ENCODE measurements at regions of chr10 and their contacts with region 1.

Region 1: DNA sequence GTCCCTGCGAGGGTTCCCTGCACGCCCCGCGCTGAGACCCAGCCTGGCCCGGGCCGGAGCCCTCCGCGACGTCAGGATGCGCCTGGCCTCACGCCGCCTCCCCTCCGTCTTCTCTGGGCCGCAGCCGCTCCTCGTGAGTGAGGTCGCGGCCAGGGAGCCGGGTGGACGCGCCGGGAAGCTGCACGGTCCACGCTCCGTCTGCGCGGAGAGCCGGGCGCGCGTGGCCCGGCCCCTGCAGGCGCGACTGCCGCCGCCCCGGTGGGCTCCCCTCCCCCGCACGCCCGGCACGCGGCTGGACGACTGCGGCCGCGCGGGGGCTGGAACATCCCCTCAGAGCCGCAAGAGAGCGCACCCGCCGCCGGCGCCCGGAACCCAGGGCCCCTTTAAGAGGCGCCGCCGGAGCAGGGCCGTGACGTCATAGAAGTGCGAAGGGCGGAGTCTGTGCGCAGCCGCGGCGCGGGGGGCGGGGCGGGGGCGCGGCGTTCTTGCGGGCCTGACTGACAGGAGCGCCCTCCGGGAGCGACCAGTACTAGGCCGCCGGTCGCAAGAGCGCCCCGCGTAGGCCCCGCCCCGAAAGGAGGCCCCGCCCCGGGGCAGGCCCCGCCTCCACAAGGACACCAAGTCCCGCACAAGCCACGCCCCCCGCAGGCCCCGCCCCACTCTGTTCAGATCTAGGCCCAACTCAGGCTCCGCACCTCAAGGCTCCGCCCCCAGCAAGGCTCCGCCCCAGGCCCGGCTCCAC is 445 bp upstream of the INPP5A start:
- DNase-seq: peak; percentile 99
- H3K4me3 ChIP-seq: peak overlapping the region; percentile 43 to 58 (median 45)
- H3K27ac ChIP-seq: peak overlapping the region; percentile 71
- H3K4me1 ChIP-seq: peaks cover 33% of the 10 kb centered on the region
- H3K27me3 ChIP-seq: no peaks in the 10 kb centered on the region
- CTCF ChIP-seq: peak in 1 of 2 donors; percentile 38
- POLR2A ChIP-seq: no peak

Region 2: DNA sequence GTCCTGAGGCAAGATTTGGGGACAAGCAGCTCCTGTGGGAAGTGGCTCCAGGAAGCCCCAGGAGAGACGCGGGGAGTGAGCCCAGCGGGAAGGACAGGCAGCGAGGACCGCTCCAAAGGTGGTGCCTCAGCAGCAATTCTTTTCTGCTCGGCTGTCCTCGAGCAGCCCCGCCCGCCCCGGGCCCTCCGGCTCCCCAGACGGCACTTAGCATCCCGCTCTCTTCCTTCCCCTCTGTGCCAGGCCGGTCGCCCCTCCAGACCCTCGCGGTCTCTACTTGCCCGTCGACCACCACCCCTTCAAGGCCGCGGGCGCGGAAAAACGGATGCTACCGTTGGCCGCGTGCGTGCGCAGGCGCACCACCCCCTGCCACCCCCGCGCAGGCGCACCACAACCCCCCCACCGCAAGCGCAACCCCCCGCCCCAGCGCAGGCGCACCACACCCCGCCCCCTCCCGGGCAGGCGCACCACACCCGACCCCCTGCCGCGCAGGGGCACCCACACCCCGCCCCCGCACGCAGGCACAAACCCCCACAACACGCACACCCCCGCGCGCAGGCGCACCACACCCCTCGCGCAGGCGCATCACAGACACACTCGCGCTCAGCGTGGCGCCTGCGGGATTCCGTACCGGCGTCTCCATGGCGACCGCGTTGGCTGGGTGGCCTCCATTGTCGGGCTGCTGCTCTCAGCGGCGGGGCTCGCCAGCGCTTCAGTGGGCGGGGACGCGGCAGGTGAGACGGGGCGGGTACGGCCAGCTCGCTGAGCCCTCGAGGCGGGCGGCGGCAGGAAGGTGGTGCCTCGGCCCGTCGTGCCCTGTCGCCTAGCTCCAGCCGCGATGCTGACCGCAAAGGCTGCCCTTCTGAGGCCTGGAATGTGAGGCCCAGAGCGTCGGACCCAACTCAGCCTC is 205.4 kb before region 1 on chr10 and contains the start of gene LRRC27:
- CTCF ChIA-PET with region 1: no interaction called
- POLR2A ChIA-PET with region 1: no interaction called
- dilution Hi-C with region 1: no loop called
- intact Hi-C with region 1: loop called (anchors 1 kb)
- DNase-seq: peak; percentile 98
- H3K4me3 ChIP-seq: peak within 1 kb of the TSS; percentile 54 to 73 (median 71)
- H3K27ac ChIP-seq: peak within 1 kb of the TSS; percentile 14
- H3K4me1 ChIP-seq: peaks cover 28% of the 10 kb centered on the region
- H3K27me3 ChIP-seq: no peaks in the 10 kb centered on the region
- CTCF ChIP-seq: no peak
- POLR2A ChIP-seq: peak; percentile 80
- total RNA-seq, gene LRRC27: 7.8 and 13.6 TPM in 2 replicates

Region 3: GRCh38 chr10:132458593-132459300 is 78.4 kb before region 1 on chr10:
- CTCF ChIA-PET with region 1: interaction called, 3 read pairs
- POLR2A ChIA-PET with region 1: no interaction called
- dilution Hi-C with region 1: no loop called
- intact Hi-C with region 1: loop called (anchors 1 kb)
- DNase-seq: peak; percentile 21
- H3K4me3 ChIP-seq: no peak overlapping the region
- H3K27ac ChIP-seq: no peak overlapping the region
- H3K4me1 ChIP-seq: no peaks in the 10 kb centered on the region
- H3K27me3 ChIP-seq: no peaks in the 10 kb centered on the region
- CTCF ChIP-seq: peak; percentile 86 to 93
- POLR2A ChIP-seq: no peak

Region 4: GRCh38 chr10:132571650-132572535 is 34.8 kb after region 1 on chr10:
- CTCF ChIA-PET with region 1: interaction called, 6 read pairs
- POLR2A ChIA-PET with region 1: no interaction called
- dilution Hi-C with region 1: no loop called
- intact Hi-C with region 1: loop called (anchors 2 kb)
- DNase-seq: peak; percentile 75
- H3K4me3 ChIP-seq: no peak overlapping the region
- H3K27ac ChIP-seq: no peak overlapping the region
- H3K4me1 ChIP-seq: peaks cover 27% of the 10 kb centered on the region
- H3K27me3 ChIP-seq: no peaks in the 10 kb centered on the region
- CTCF ChIP-seq: peak; percentile 4
- POLR2A ChIP-seq: no peak

Region 5: GRCh38 chr10:132627666-132628531 is 90.8 kb after region 1 on chr10:
- CTCF ChIA-PET with region 1: no interaction called
- POLR2A ChIA-PET with region 1: no interaction called
- dilution Hi-C with region 1: no loop called
- intact Hi-C with region 1: loop called (anchors 2 kb)
- DNase-seq: peak; percentile 35
- H3K4me3 ChIP-seq: no peak overlapping the region
- H3K27ac ChIP-seq: no peak overlapping the region
- H3K4me1 ChIP-seq: peaks cover 12% of the 10 kb centered on the region
- H3K27me3 ChIP-seq: no peaks in the 10 kb centered on the region
- CTCF ChIP-seq: no peak
- POLR2A ChIP-seq: no peak